SK-N-SH (cell line): ENCODE measurements at regions of chr11 and their contacts with region 1.

Region 1: DNA sequence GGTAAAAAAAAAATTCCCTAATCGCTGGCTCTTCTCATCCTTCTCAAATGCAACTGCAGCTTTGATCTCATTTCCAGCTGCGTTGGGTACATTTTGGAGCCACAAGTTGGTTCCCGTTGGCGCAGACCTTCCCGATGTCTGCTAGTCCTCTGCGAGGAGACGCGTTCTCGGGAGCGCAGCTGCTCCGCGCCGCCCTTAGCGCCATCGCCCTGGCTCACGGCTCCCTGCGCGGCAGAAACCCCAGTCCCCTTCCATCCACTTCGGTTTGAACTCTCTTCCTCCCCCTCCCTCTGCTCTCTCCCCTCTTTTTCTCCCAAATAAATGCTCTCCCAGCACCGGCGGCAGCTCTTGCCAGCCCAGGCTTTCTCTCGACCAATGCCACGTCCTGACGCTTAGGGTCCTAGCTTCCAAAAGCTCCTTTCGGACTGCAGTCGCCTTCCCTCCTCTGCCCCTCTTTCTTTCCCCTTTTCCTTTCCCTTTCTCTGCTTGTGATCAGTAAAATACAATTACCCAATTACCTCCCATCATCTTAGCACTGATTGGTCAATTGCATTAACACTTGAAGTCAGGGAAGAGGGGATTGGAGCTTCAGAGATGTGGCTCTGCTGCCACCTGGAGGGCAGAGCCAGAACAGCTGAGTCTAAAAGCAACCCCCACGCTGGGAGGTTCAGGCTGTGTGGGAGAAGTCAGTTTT is 1165.7 kb downstream of the LRRC4C start:
- DNase-seq: peak; percentile 82
- H3K4me3 ChIP-seq: peak overlapping the region; percentile 58 to 97
- H3K27ac ChIP-seq: peak overlapping the region; percentile 49 to 51; a peak in 2 of 4 replicates
- H3K4me1 ChIP-seq: peaks cover 7 to 9% of the 10 kb centered on the region in 2 experiments; a peak in 3 of 4 replicates
- H3K27me3 ChIP-seq: no peaks in the 10 kb centered on the region
- CTCF ChIP-seq: peak; percentile 97
- EP300 ChIP-seq: no peak
- RAD21 ChIP-seq: peak; percentile 100

Region 2: DNA sequence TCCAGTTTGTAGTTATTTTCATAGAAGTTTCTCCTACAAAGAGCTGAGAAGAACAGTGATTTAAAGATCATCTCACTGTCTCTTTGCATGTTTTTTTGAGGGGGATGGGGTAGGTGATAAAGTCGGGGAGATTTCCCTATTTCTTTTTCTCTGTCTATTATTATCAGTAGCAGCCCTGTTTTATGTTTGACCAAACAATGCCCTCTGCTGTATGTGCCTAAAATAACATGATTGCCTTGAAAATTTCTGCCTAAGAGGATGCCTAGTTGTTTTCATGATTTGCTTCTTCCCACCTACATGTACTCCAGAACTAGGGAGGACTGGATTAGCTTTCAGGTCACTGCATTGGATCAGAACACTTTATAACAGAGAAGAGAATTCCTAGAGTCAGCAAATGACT is 164.5 kb before region 1 on chr11:
- CTCF ChIA-PET with region 1: interaction called, 107 read pairs
- POLR2A ChIA-PET with region 1: no interaction called
- DNase-seq: peak; percentile 12
- H3K4me3 ChIP-seq: no peak overlapping the region; a peak in 1 of 4 replicates
- H3K27ac ChIP-seq: no peak overlapping the region
- H3K4me1 ChIP-seq: peaks cover 0 to 26% of the 10 kb centered on the region in 2 experiments; a peak in 1 of 4 replicates
- H3K27me3 ChIP-seq: no peaks in the 10 kb centered on the region; the same call in 1 of the 2 replicates
- CTCF ChIP-seq: peak; percentile 53
- EP300 ChIP-seq: no peak
- RAD21 ChIP-seq: peak; percentile 73

Region 3: DNA sequence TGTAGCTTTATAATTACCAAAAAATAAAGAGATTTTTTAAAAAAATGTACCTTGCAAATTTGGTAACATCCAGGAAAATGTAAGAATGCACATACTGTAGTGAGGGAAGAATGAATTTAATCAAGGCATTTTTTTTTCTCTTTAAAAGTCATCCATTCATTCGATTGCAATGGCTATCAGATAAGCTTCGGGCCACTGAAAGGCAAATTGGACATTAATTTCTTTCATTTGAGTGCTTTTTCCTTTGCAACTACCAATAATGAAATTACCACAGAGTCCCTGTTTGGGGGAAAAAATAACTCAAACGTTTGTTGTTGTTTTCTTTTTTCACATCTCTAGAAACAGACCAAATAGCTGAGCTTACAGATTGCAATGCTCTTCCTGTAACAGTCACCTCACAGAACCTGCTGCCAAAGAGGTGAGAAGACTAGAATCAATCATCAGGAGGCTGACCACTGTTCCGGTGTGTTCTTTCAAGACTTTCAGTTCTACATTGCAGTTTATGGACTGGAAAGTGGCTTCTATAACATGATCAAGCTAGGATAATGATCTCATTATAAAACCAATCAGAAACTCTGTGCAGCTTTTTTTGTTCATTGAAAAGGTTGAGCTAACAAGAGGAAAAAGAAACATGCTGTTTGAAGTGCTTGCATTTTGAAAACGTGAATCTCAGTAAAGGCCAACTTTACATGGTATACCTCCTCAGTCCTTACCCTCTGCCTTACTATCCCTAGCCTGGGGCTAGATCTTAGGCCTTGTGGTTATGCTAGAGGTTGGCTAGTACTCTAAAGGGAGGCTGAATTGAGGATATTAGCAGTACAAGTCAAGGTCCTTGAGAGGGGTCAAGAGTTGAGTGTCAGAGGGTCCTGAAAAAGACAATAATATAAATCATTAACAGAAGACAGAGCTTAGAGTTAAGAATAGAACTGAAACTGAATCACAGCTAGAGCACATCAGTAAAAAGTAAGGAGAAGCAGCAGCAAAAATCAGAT is 110.4 kb before region 1 on chr11:
- CTCF ChIA-PET with region 1: interaction called, 13 read pairs
- POLR2A ChIA-PET with region 1: no interaction called
- DNase-seq: no peak
- H3K4me3 ChIP-seq: no peak overlapping the region
- H3K27ac ChIP-seq: peak overlapping the region in 1 of 2 experiments; percentile 67; a peak in 1 of 4 replicates
- H3K4me1 ChIP-seq: peaks cover 0 to 30% of the 10 kb centered on the region in 2 experiments; a peak in 2 of 4 replicates
- H3K27me3 ChIP-seq: no peaks in the 10 kb centered on the region
- CTCF ChIP-seq: no peak
- EP300 ChIP-seq: peak in 1 of 2 experiments; percentile 64; a peak in 1 of 4 replicates
- RAD21 ChIP-seq: no peak

Region 4: DNA sequence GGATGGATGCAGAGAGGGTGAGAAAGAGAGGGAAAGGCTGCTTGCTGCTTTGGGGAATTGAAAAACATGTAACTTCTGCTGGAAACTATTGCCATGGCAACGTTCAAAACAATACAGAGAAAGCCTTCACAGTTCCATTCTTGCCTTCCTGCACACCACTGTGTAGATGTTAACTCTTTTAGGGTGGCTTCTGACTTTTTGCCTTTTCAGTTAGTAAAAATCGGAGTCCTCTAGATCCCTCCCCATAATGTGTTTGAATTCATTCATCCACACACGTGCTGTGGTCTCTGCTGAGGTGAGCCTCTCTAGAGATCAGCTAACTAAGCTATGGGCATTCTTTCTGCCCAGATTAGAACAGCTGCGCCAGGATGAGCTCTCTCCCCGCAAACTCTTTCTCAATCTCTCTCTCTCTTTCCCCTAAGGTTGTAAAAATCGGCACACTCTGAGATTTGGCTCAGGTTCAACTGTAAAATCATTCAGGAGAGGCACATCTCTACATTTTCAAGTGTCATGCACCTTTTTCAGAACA is 12.7 kb before region 1 on chr11:
- CTCF ChIA-PET with region 1: interaction called, 20 read pairs
- POLR2A ChIA-PET with region 1: no interaction called
- DNase-seq: no peak
- H3K4me3 ChIP-seq: no peak overlapping the region
- H3K27ac ChIP-seq: no peak overlapping the region
- H3K4me1 ChIP-seq: peaks cover 12 to 20% of the 10 kb centered on the region in 2 experiments; a peak in 3 of 4 replicates
- H3K27me3 ChIP-seq: no peaks in the 10 kb centered on the region
- CTCF ChIP-seq: no peak
- EP300 ChIP-seq: no peak
- RAD21 ChIP-seq: no peak

Region 5: GRCh38 chr11:40306938-40307548 is 13.2 kb after region 1 on chr11:
- CTCF ChIA-PET with region 1: interaction called, 56 read pairs
- POLR2A ChIA-PET with region 1: no interaction called
- DNase-seq: peak; percentile 60
- H3K4me3 ChIP-seq: no peak overlapping the region; a peak in 1 of 4 replicates
- H3K27ac ChIP-seq: no peak overlapping the region
- H3K4me1 ChIP-seq: peaks cover 0 to 7% of the 10 kb centered on the region in 2 experiments; a peak in 1 of 4 replicates
- H3K27me3 ChIP-seq: no peaks in the 10 kb centered on the region
- CTCF ChIP-seq: peak; percentile 87
- EP300 ChIP-seq: no peak
- RAD21 ChIP-seq: peak; percentile 83